K562 (cell line): ENCODE measurements at regions of chr10 and their contacts with region 1.

Region 1: GRCh38 chr10:122142641-122143237 is 128.4 kb upstream of the BTBD16 start:
- DNase-seq: peak; percentile 18 to 73 (median 60)
- ATAC-seq: peak; percentile 74
- H3K4me3 ChIP-seq: no peak overlapping the region
- H3K27ac ChIP-seq: no peak overlapping the region
- H3K4me1 ChIP-seq: no peaks in the 10 kb centered on the region
- H3K27me3 ChIP-seq: peaks cover 2 to 28% of the 10 kb centered on the region in 2 experiments; a peak in 4 of 5 replicates
- CTCF ChIP-seq: peak; percentile 55 to 75 (median 63)
- EP300 ChIP-seq: no peak
- POLR2A ChIP-seq: no peak
- RAD21 ChIP-seq: peak in 1 of 2 experiments; percentile 62; a peak in 2 of 4 replicates

Region 2: GRCh38 chr10:122128357-122128756 is 14.4 kb before region 1 on chr10:
- CTCF ChIA-PET with region 1: no interaction called
- POLR2A ChIA-PET with region 1: no interaction called
- in situ Hi-C with region 1: no loop called
- intact Hi-C with region 1: no loop called
- DNase-seq: no peak
- ATAC-seq: no peak
- H3K4me3 ChIP-seq: no peak overlapping the region
- H3K27ac ChIP-seq: no peak overlapping the region
- H3K4me1 ChIP-seq: no peaks in the 10 kb centered on the region
- H3K27me3 ChIP-seq: peaks cover 2 to 21% of the 10 kb centered on the region in 2 experiments; a peak in 2 of 5 replicates
- CTCF ChIP-seq: no peak
- EP300 ChIP-seq: no peak
- POLR2A ChIP-seq: no peak
- RAD21 ChIP-seq: no peak

Region 3: GRCh38 chr10:122267849-122268737 is 125.4 kb after region 1 on chr10:
- CTCF ChIA-PET with region 1: no interaction called
- POLR2A ChIA-PET with region 1: no interaction called
- in situ Hi-C with region 1: no loop called
- intact Hi-C with region 1: loop called (anchors 10 kb)
- DNase-seq: peak; percentile 37 to 75 (median 70)
- ATAC-seq: peak; percentile 96
- H3K4me3 ChIP-seq: no peak overlapping the region
- H3K27ac ChIP-seq: no peak overlapping the region
- H3K4me1 ChIP-seq: no peaks in the 10 kb centered on the region
- H3K27me3 ChIP-seq: peaks cover 0 to 4% of the 10 kb centered on the region in 2 experiments; a peak in 1 of 5 replicates
- CTCF ChIP-seq: peak; percentile 68 to 85 (median 77)
- EP300 ChIP-seq: no peak
- POLR2A ChIP-seq: no peak
- RAD21 ChIP-seq: peak in 1 of 2 experiments; percentile 38; a peak in 2 of 4 replicates